AG04449 (cell line): ENCODE measurements at regions of chr19 and their contacts with region 1.

Region 1: DNA sequence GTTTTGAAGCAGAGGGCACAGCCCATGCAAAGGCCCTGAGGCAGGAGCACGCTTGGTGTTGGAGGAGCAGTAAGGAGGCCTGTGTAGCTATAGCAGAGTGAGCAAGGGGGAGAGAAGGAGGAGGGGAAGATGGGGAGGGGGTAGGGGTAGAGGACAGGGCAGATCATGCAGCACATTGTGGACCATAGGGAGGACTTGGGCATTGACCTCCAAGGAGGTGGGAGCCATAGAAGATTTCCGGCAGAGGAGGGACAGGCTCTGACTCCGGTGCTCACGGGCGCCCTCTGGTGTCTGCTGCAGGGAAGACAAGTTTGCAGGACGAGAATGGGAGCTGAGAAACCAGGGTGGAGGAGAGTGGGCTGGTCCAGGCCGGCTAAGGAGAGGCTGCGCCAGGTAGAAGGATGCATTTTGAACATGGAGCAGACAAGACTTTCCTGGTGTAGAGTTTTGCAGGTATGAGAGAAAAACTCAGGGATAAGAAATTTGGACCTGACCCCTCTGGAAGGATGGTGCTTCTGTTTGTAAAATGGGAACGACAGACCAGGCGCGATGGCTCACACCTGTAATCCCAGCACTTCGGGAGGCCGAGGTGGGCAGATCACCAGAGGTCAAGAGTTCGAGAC is 13.7 kb upstream of the CREB3L3 start:
- DNase-seq: no peak
- H3K4me3 ChIP-seq: no peak overlapping the region
- CTCF ChIP-seq: peak; percentile 81

Region 2: DNA sequence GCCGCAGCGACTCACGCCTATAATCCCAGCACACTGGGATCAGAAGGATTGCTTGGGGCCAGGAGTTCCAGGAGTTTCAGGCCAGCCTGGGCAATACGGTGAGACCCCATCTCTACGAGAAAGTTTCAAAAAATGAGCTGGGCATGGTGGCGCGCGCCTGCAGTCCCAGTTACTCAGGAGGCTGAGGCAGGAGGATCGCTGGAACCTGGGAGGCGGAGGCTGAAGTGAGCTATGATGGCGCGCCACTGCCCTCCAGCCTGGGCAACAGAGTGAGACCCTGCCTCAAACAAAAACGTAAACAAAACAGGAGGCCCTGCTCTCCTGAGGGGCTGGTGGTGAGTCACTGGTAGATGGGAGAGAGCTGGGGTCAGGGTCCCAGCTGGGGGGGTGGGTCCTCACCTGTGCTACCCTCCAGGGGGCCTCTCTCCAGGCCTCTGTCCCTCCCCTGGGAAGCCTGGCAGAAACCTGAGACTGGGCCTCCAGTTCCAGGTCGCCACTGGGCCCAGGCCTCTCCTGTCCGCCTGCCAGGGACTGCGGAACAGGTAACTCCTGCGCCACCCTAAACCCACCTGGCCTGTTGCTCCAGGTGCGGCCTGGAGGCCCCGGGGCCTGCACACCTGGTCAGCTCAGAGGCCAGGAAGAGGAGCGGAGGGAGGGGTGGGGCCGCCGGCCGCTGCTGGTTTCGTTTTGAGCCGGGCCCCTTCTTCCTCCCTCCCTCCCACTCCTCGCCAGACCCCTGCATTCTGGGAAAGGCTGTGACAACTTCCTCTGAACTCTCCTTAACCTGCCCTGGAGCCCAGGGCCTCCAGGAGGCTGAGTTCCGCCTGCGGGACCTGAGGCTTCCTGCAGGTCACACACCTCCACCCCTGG is 55.8 kb before region 1 on chr19:
- CTCF ChIA-PET with region 1: no interaction called
- POLR2A ChIA-PET with region 1: no interaction called
- DNase-seq: no peak
- H3K4me3 ChIP-seq: no peak overlapping the region
- CTCF ChIP-seq: no peak

Region 3: GRCh38 chr19:4097501-4097900 is 42.2 kb before region 1 on chr19:
- CTCF ChIA-PET with region 1: interaction called, 12 read pairs
- POLR2A ChIA-PET with region 1: no interaction called
- DNase-seq: no peak
- H3K4me3 ChIP-seq: no peak overlapping the region
- CTCF ChIP-seq: no peak

Region 4: GRCh38 chr19:4115050-4115817 is 24.5 kb before region 1 on chr19:
- CTCF ChIA-PET with region 1: interaction called, 12 read pairs
- POLR2A ChIA-PET with region 1: no interaction called
- DNase-seq: no peak
- H3K4me3 ChIP-seq: no peak overlapping the region
- CTCF ChIP-seq: no peak

Region 5: DNA sequence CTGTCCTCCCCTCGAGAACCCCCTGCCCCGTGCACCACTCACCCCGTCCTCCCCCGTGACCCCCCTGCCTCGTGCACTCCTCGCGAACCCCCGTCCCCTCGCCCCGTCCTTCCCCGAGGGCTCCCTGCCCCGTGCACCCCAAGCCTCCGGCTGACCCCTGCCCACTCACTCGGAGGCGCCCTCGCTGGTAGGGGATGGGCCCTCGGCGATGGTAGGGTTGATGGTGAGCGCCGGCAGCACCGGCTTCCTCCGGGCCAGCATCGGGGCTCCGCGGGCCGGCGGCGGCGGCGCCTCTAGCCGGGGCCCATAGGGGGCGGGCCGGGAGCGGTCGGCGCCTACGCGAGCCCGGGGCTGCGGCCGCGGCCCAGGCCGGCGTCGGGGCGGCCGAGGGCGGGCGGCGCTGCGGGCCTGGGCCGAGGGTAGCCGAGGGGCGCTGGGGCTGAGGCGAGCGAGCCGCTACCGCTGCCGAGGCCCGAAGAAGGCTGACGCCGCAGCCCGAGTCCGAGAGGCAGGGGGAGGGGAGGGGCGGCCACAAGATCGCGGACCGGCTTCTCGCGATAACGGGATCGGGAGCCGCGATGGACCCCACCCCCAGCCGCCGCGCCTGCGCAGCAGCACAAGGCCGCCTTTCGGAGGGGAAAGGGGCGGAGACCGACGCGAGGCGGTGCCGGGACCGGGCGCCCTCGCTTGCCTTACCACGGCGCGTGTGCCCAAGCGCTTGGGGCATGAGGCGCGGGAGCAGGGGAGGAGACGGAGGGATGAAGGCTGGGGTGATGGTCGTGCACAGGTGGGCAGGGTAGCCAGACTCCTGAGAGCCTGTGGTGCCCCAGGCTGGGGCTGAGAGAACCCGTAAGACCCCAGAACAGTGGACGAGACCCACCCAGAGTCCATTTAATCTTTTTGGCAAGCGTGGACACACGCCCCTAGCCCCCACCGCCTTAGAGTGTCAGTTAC is 15.8 kb before region 1 on chr19 and contains the start of gene MAP2K2:
- CTCF ChIA-PET with region 1: interaction called, 18 read pairs
- POLR2A ChIA-PET with region 1: no interaction called
- DNase-seq: peak; percentile 19
- H3K4me3 ChIP-seq: peak within 1 kb of the TSS; percentile 88
- CTCF ChIP-seq: no peak

Region 6: GRCh38 chr19:4152241-4152998 is 12.7 kb after region 1 on chr19:
- CTCF ChIA-PET with region 1: interaction called, 34 read pairs
- POLR2A ChIA-PET with region 1: no interaction called
- DNase-seq: no peak
- H3K4me3 ChIP-seq: no peak overlapping the region
- CTCF ChIP-seq: no peak

Region 7: GRCh38 chr19:4161415-4162077 is 21.8 kb after region 1 on chr19:
- CTCF ChIA-PET with region 1: interaction called, 14 read pairs
- POLR2A ChIA-PET with region 1: no interaction called
- DNase-seq: no peak
- H3K4me3 ChIP-seq: no peak overlapping the region
- CTCF ChIP-seq: no peak

Region 8: DNA sequence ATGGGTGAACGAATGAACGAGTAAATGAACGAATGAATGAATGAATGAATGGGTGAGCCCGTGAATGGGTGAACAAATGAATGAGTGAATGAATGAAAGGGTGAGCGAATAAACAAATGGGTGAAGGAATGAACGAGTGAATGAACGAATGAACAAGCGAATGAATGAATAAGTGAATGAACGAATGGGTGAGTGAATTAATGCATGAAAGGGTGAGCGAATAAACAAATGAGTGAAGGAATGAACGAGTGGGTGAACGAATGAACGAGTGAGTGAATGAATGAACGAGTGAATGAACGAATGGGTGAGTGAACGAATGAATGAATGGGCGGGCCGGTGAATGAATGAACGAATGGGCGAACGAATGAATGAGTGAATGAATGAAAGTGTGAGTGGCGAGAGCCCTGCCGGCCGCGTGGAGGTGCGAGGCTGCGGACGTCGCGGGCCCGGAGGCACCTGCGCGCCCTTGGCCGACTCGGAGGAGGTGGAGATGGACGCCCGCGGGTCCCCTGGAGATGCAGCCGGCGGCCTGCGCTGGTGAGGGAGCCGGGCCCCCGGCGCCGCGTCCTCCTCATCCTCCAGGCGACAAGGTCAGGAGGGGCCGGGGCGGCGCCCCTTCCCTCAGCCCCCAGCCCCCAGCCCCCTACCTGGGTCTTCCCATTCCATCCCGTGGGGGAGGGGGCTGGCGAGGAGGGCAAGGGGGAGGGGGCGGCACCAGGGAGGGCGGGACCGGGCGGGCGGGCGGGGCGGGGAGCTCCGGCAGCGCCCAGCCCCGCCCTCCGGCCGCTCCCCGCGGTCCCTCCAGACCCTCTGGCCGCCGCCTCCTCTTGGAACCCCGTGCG is 58.1 kb after region 1 on chr19:
- CTCF ChIA-PET with region 1: interaction called, 23 read pairs
- POLR2A ChIA-PET with region 1: no interaction called
- DNase-seq: no peak
- H3K4me3 ChIP-seq: no peak overlapping the region
- CTCF ChIP-seq: no peak